ENCODE measurements at regions of chr9 and their contacts with region 1.

Region 1: GRCh38 chr9:105244003-105244733 is at the start of gene SLC44A1:
- DNase-seq: peak; percentile 92
- ATAC-seq: peak; percentile 76
- H3K4me3 Mint-ChIP-seq: peak within 1 kb of the TSS; percentile 85
- H3K27ac Mint-ChIP-seq: peak within 1 kb of the TSS; percentile 95
- H3K4me1 Mint-ChIP-seq: peaks cover 71% of the 10 kb centered on the region
- H3K27me3 Mint-ChIP-seq: no peaks in the 10 kb centered on the region
- CTCF ChIP-seq: no peak
- total RNA-seq, gene SLC44A1: 45.9 to 48.9 TPM (median 47.6 TPM) in 3 replicates

Region 2: DNA sequence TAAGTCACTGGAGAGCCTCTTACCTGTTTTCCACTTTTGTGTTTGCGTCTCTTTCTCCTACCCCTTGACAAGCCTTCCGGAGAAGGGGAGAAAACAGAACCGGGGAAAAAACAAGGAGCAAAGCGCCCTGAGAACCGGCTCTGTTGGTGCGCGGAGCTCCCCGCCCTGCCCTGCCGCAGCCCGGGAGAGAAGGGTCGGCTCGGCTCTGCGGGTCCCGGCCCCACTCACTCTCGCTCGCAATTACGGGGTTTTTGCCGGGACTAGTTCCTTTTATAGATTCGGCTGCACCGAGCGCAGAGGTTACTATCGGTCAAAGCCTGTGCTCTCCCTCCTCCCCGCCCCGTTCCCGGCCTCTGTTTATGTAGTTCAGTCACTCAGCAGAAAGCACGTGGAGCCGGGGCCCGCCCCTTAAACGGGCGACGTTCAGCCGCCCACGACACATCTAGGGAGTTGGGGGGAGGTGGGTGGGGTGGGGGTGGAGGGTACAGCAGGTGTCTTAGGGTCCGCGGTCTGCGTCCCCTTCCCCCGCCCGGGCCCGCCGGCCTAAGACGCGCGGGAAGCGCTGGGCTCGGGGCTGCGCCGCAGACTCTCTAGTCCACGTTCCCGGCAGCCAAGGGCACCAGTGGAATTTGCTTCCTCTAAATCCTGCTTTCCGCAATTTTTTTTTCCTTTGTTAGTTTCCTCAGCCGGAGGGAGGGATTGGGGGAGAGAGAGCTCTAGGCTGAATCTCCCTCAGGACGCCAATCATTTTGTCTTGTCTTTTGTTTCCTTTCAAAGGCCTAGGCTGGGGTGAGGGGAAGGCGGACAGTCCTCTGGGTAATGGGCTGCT is 316.0 kb before region 1 on chr9 and contains the start of gene ABCA1:
- CTCF ChIA-PET with region 1: interaction called, 3 read pairs
- POLR2A ChIA-PET with region 1: interaction called, 25 read pairs
- DNase-seq: peak; percentile 87
- ATAC-seq: peak; percentile 55
- H3K4me3 Mint-ChIP-seq: peak within 1 kb of the TSS; percentile 95
- H3K27ac Mint-ChIP-seq: peak within 1 kb of the TSS; percentile 94
- H3K4me1 Mint-ChIP-seq: peaks cover 27% of the 10 kb centered on the region
- H3K27me3 Mint-ChIP-seq: peaks cover 20% of the 10 kb centered on the region
- CTCF ChIP-seq: no peak
- total RNA-seq, gene ABCA1: 4.6 to 7.8 TPM (median 5.8 TPM) in 3 replicates

Region 3: GRCh38 chr9:104991144-104991953 is 252.8 kb before region 1 on chr9:
- CTCF ChIA-PET with region 1: no interaction called
- POLR2A ChIA-PET with region 1: interaction called, 22 read pairs
- DNase-seq: peak; percentile 86
- ATAC-seq: peak; percentile 52
- H3K4me3 Mint-ChIP-seq: peak overlapping the region; percentile 80
- H3K27ac Mint-ChIP-seq: peak overlapping the region; percentile 92
- H3K4me1 Mint-ChIP-seq: peaks cover 44% of the 10 kb centered on the region
- H3K27me3 Mint-ChIP-seq: peaks cover 54% of the 10 kb centered on the region
- CTCF ChIP-seq: no peak

Region 4: GRCh38 chr9:105103782-105104181 is 140.4 kb before region 1 on chr9:
- CTCF ChIA-PET with region 1: no interaction called
- POLR2A ChIA-PET with region 1: no interaction called
- DNase-seq: no peak
- ATAC-seq: no peak
- H3K4me3 Mint-ChIP-seq: no peak overlapping the region
- H3K27ac Mint-ChIP-seq: no peak overlapping the region
- H3K4me1 Mint-ChIP-seq: no peaks in the 10 kb centered on the region
- H3K27me3 Mint-ChIP-seq: no peaks in the 10 kb centered on the region
- CTCF ChIP-seq: no peak

Region 5: GRCh38 chr9:105138306-105138801 is 105.8 kb before region 1 on chr9:
- CTCF ChIA-PET with region 1: interaction called, 10 read pairs
- POLR2A ChIA-PET with region 1: no interaction called
- DNase-seq: peak; percentile 42
- ATAC-seq: peak; percentile 82
- H3K4me3 Mint-ChIP-seq: peak overlapping the region; percentile 50
- H3K27ac Mint-ChIP-seq: peak overlapping the region; percentile 95
- H3K4me1 Mint-ChIP-seq: peaks cover 34% of the 10 kb centered on the region
- H3K27me3 Mint-ChIP-seq: peaks cover 13% of the 10 kb centered on the region
- CTCF ChIP-seq: no peak

Region 6: GRCh38 chr9:105359892-105360291 is 115.7 kb after region 1 on chr9:
- CTCF ChIA-PET with region 1: interaction called, 11 read pairs
- POLR2A ChIA-PET with region 1: interaction called, 4 read pairs
- DNase-seq: no peak
- ATAC-seq: no peak
- H3K4me3 Mint-ChIP-seq: no peak overlapping the region
- H3K27ac Mint-ChIP-seq: 0 out of 2 replicates have a peak overlapping the region, but pooled peaks have one; percentile 16
- H3K4me1 Mint-ChIP-seq: no peaks in the 10 kb centered on the region
- H3K27me3 Mint-ChIP-seq: no peaks in the 10 kb centered on the region
- CTCF ChIP-seq: no peak

Region 7: DNA sequence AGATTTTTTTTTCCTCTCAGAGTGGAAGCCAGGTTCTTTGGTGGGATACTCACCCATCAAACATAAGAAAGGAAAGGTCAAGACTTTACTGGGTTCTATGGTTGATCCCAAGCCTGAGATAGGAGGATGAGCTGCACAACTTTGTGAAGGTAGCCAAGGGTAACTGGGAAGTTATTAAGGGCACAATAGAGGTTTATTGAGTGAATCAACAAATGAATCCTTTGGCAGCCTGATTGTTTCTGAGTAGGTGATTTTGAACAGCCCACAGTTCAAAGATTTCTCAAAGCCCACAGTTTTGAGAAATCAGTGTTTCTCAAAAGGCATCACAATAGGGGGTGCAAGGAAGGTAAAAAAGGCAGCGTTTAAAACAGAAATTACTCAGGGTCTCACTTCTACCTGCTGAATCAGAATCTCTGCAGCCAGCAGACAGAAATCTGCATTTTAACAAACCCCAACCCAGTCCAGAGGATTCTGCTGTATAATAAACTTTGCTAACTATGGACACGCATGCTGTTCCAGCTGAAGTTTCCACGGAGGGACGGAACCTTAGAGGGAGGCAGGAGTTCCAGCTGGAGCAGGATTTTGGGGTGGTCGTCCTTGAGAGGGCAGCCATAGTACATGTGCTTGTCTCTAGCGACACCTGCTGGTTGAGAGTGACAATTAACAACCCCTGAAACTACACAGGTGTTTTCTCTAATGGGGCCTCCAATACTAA is 170.9 kb after region 1 on chr9:
- CTCF ChIA-PET with region 1: interaction called, 23 read pairs
- POLR2A ChIA-PET with region 1: interaction called, 5 read pairs
- DNase-seq: peak; percentile 75
- ATAC-seq: peak; percentile 88
- H3K4me3 Mint-ChIP-seq: peak overlapping the region; percentile 65
- H3K27ac Mint-ChIP-seq: no peak overlapping the region
- H3K4me1 Mint-ChIP-seq: peaks cover 25% of the 10 kb centered on the region
- H3K27me3 Mint-ChIP-seq: peaks cover 17% of the 10 kb centered on the region
- CTCF ChIP-seq: peak; percentile 86; the same call in 1 of the 2 replicates